ENCODE measurements at regions of chrX and their contacts with region 1.

Region 1: GRCh38 chrX:137051978-137052642 is 18.3 kb upstream of the GPR101 start:
- DNase-seq: peak; percentile 62 to 87 (median 82)
- ATAC-seq: peak; percentile 96
- H3K4me3 ChIP-seq: peak overlapping the region; percentile 50 to 54
- H3K4me3 Mint-ChIP-seq: peak overlapping the region; percentile 85
- H3K27ac ChIP-seq: no peak overlapping the region
- H3K27ac Mint-ChIP-seq: no peak overlapping the region
- H3K4me1 ChIP-seq: peaks cover 7% of the 10 kb centered on the region
- H3K4me1 Mint-ChIP-seq: peaks cover 13% of the 10 kb centered on the region
- H3K27me3 ChIP-seq: no peaks in the 10 kb centered on the region
- H3K27me3 Mint-ChIP-seq: peaks cover 27% of the 10 kb centered on the region
- CTCF ChIP-seq: peak; percentile 74

Region 2: GRCh38 chrX:135973548-135974278 is 1078.4 kb before region 1 on chrX and contains the start of gene MMGT1:
- CTCF ChIA-PET with region 1: no interaction called
- POLR2A ChIA-PET with region 1: no interaction called
- intact Hi-C with region 1: loop called in 1 of 2 experiments (anchors 10 kb)
- DNase-seq: peak; percentile 62 to 92 (median 78)
- ATAC-seq: peak; percentile 87
- H3K4me3 ChIP-seq: peak within 1 kb of the TSS; percentile 91 to 99
- H3K4me3 Mint-ChIP-seq: peak within 1 kb of the TSS; percentile 97
- H3K27ac ChIP-seq: peak within 1 kb of the TSS; percentile 93 to 94
- H3K27ac Mint-ChIP-seq: peak within 1 kb of the TSS; percentile 96
- H3K4me1 ChIP-seq: peaks cover 14% of the 10 kb centered on the region
- H3K4me1 Mint-ChIP-seq: peaks cover 36% of the 10 kb centered on the region
- H3K27me3 ChIP-seq: no peaks in the 10 kb centered on the region
- H3K27me3 Mint-ChIP-seq: no peaks in the 10 kb centered on the region
- CTCF ChIP-seq: no peak
- total RNA-seq, gene MMGT1: 35.0 to 35.6 TPM

Region 3: GRCh38 chrX:135985141-135985972 is 1066.8 kb before region 1 on chrX and contains the start of gene SLC9A6:
- CTCF ChIA-PET with region 1: no interaction called
- POLR2A ChIA-PET with region 1: no interaction called
- intact Hi-C with region 1: loop called in 1 of 2 experiments (anchors 10 kb)
- DNase-seq: peak in 8 of 9 experiments; percentile 46 to 80 (median 68)
- ATAC-seq: peak; percentile 88
- H3K4me3 ChIP-seq: peak within 1 kb of the TSS; percentile 71 to 83
- H3K4me3 Mint-ChIP-seq: peak within 1 kb of the TSS; percentile 91
- H3K27ac ChIP-seq: peak within 1 kb of the TSS; percentile 64 to 71
- H3K27ac Mint-ChIP-seq: peak within 1 kb of the TSS; percentile 93
- H3K4me1 ChIP-seq: peaks cover 26% of the 10 kb centered on the region
- H3K4me1 Mint-ChIP-seq: peaks cover 64% of the 10 kb centered on the region
- H3K27me3 ChIP-seq: no peaks in the 10 kb centered on the region
- H3K27me3 Mint-ChIP-seq: no peaks in the 10 kb centered on the region
- CTCF ChIP-seq: no peak
- total RNA-seq, gene SLC9A6: 15.9 to 18.7 TPM

Region 4: DNA sequence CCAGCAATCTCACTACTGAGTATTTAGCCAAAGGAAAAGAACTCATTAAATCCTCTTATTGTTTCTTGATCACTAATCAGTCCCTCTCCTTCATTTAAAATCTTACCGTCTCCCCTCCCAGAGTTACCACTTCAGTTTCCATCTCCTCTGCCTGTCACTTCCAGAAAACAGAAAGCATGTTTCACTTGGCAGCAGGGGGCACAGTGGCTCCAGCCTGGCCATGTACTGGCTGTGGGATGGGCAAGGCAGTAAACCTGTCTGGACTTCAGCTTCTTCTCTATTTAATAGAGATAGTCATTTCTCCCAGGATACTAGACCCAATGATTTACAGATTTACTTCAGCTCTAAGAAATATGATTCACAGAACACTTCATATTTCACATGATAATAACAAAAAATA is 341.0 kb before region 1 on chrX:
- CTCF ChIA-PET with region 1: no interaction called
- POLR2A ChIA-PET with region 1: no interaction called
- intact Hi-C with region 1: loop called in 1 of 2 experiments (anchors 5 kb)
- DNase-seq: peak in 3 of 9 experiments; percentile 15 to 32 (median 23)
- ATAC-seq: no peak
- H3K4me3 ChIP-seq: no peak overlapping the region
- H3K4me3 Mint-ChIP-seq: no peak overlapping the region
- H3K27ac ChIP-seq: no peak overlapping the region
- H3K27ac Mint-ChIP-seq: peak overlapping the region; percentile 90
- H3K4me1 ChIP-seq: peaks cover 25% of the 10 kb centered on the region
- H3K4me1 Mint-ChIP-seq: peaks cover 40% of the 10 kb centered on the region
- H3K27me3 ChIP-seq: no peaks in the 10 kb centered on the region
- H3K27me3 Mint-ChIP-seq: no peaks in the 10 kb centered on the region
- CTCF ChIP-seq: no peak

Region 5: DNA sequence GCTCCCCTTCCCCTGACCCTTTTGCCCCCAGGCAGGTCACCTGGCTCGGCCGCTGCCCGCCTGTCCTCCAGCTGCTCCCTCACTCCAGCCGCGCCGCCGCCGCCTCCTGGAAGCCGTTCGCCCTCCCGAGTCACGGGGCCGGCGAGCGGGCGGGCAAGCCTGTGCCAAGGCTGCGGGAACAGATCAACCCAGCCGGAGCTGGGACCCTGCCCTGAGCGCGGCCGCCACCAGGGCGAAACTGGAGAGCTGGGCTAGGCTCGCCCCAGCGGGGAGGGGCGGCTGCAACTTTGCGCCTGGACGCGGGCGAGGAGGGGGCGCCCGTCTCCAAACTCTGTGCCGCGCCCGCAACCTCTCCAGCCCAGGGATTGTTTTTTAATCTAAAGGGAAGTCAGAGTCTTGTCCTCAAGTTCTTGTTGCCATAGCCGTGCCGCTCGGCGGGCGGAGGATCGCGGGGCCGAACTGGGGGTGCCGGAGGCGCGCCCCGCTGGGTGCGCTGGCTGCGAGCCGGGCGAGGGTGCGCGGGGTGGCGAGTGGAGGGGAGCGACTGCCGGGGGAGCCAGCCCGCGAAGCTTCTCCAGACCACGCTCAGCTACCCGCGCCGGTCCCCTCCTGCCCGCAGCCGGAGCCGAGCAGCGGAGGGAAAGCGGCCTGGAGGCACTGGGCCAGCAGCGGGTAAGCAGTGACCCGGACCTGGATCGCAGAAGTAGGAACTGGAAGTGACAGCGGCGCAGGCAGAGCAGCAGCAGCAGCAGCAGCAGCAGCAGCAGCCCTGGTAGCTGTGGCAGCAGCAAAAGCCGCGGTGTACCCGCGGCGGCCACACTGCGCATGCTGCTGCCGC is 284.8 kb before region 1 on chrX:
- CTCF ChIA-PET with region 1: no interaction called
- POLR2A ChIA-PET with region 1: no interaction called
- intact Hi-C with region 1: loop called in 1 of 2 experiments (anchors 5 kb)
- DNase-seq: peak in 8 of 9 experiments; percentile 16 to 71 (median 56)
- ATAC-seq: peak; percentile 71
- H3K4me3 ChIP-seq: peak overlapping the region; percentile 55 to 58
- H3K4me3 Mint-ChIP-seq: peak overlapping the region; percentile 82
- H3K27ac ChIP-seq: peak overlapping the region; percentile 15 to 25
- H3K27ac Mint-ChIP-seq: peak overlapping the region; percentile 87
- H3K4me1 ChIP-seq: peaks cover 61% of the 10 kb centered on the region
- H3K4me1 Mint-ChIP-seq: peaks cover 68% of the 10 kb centered on the region
- H3K27me3 ChIP-seq: no peaks in the 10 kb centered on the region
- H3K27me3 Mint-ChIP-seq: no peaks in the 10 kb centered on the region
- CTCF ChIP-seq: no peak

Region 6: DNA sequence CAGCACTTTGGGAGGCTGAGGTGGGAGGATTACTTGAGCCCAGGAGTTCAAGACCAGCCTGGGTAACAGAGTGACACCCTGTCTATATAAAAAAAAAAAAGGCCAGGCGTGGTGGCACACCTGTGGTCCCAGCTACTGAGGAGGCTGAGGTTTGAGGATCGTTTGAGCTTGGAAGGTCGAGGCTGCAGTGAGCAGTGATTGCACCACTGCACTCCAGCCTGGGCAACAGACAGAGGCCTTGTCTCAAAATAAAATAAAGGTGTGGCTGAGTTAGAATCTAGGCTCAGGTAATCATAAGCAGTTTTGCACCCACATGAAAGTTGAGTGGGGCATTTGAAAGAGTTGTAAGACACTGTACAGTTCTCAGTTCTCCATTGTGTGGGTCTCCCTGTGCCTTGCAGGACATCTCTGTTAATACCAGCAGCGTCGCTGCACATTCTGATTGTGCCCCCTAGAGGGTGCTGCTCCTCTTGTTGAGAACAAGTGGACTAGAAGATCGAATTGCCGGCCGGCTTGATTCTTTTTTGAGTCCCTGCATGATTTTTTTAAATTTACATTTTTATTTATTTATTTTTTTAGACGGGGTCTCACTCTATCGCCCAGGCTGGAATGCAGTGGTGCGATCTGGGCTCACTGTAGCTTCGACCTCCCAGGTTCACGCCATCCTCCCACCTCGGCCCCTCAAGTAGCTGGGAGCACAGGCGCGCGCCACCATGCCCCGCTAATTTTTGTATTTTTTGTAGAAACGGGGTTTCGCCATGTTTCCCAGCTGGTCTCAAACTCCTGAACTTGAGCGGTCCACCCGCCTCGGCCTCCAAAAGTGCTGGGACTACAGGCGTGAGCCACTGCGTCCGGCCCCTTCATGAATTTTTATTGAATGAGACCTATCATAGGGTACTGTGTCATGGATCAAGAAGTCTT is 98.0 kb before region 1 on chrX:
- CTCF ChIA-PET with region 1: interaction called, 8 read pairs
- POLR2A ChIA-PET with region 1: no interaction called
- intact Hi-C with region 1: loop called (anchors 1 kb)
- DNase-seq: peak; percentile 12 to 70 (median 46)
- ATAC-seq: peak; percentile 49
- H3K4me3 ChIP-seq: no peak overlapping the region
- H3K4me3 Mint-ChIP-seq: no peak overlapping the region
- H3K27ac ChIP-seq: no peak overlapping the region
- H3K27ac Mint-ChIP-seq: no peak overlapping the region
- H3K4me1 ChIP-seq: no peaks in the 10 kb centered on the region
- H3K4me1 Mint-ChIP-seq: no peaks in the 10 kb centered on the region
- H3K27me3 ChIP-seq: no peaks in the 10 kb centered on the region
- H3K27me3 Mint-ChIP-seq: no peaks in the 10 kb centered on the region
- CTCF ChIP-seq: peak; percentile 51